Testis (tissue), 5 donors: ENCODE measurements at regions of chr2 and their contacts with region 1.

Region 1: DNA sequence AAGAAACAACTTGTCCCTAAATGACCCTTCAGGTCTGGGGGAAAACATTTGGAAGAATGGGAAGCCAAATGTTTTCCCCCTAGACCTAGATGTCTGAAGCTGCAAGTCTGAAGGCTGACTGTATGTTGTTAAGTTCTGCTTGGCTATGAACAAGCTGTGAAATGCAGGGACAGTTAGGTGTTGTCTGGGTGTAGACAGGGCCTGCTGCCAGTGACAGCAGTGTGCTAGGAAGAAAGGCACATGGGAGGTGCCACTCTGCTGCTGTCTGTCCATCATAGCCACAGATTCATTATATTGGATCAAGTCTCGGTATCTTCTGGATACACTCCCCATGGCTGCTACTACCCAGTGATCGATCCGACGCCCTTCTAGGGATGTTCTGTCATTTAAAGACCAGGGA is 265.9 kb upstream of the PXDN start:
- DNase-seq: no peak
- H3K4me3 ChIP-seq: no peak overlapping the region
- H3K27ac ChIP-seq: no peak overlapping the region
- H3K4me1 ChIP-seq: no peaks in the 10 kb centered on the region
- H3K27me3 ChIP-seq: no peaks in the 10 kb centered on the region
- CTCF ChIP-seq: no peak
- POLR2A ChIP-seq: no peak

Region 2: DNA sequence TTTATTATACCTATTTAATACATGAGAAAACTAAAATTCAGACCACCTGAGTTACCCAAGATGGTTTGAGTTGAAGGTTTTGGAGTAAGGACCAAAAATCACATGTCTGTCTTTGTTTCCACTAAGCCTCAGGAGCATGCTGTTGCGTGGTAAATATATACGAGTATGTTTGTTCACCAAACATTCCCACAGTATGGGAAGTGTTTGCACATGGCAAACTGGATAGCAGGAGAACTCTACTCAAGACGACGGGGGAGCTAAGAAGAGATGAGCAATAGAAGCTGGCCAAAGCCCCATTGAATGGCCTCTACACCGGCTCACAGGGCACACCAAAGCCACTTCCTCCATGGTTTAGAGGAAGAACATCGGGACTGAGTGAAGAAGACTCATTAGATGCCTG is 29.6 kb before region 1 on chr2:
- intact Hi-C with region 1: loop called (anchors 2 kb)
- DNase-seq: no peak
- H3K4me3 ChIP-seq: no peak overlapping the region
- H3K27ac ChIP-seq: no peak overlapping the region
- H3K4me1 ChIP-seq: no peaks in the 10 kb centered on the region
- H3K27me3 ChIP-seq: no peaks in the 10 kb centered on the region
- CTCF ChIP-seq: no peak
- POLR2A ChIP-seq: no peak